K562 (cell line): ENCODE measurements at regions of chr17 and their contacts with region 1.

Region 1: DNA sequence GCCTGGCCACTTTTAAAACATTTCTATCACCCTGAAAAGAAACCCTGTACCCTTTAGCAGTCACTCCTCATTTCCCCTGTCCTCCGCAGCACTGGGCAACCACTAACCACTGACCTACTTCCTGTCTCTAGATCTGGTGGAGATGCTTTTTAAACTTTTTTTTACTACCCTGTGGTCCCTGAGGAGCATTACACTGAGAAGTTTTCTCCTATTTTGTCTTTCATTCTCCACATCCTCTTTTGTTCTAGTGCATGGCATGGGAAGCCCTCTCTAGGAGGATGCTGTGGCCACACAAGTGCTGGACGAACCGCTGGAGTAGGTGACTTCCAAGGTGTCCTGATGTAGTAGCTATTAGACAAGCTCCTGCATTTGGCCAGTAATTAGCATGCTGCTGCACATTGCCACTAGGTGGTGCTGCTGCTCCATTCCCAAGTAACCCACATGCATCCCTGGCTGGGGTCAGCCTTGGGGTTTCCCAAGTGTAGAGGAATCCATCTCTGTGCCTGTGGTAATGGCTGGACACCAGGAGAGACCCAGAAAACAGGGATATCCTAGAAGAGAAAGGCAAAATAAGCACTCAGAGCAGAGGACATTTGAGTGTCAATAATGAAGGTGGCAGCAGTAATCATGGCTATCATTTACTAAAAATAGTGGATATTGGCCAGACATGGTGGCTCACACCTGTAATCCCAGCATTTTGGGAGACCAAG is 143.8 kb upstream of the CRHR1 start:
- DNase-seq: peak; percentile 69 to 83 (median 80)
- ATAC-seq: peak; percentile 96
- H3K4me3 ChIP-seq: no peak overlapping the region
- H3K27ac ChIP-seq: no peak overlapping the region
- H3K4me1 ChIP-seq: no peaks in the 10 kb centered on the region
- H3K27me3 ChIP-seq: peaks cover 8 to 14% of the 10 kb centered on the region in 2 experiments; a peak in 4 of 5 replicates
- CTCF ChIP-seq: peak; percentile 94 to 96 (median 96)
- EP300 ChIP-seq: no peak
- POLR2A ChIP-seq: no peak
- RAD21 ChIP-seq: peak; percentile 85 to 92

Region 2: GRCh38 chr17:45428050-45428617 is 212.2 kb before region 1 on chr17:
- CTCF ChIA-PET with region 1: no interaction called
- POLR2A ChIA-PET with region 1: no interaction called
- in situ Hi-C with region 1: loop called (anchors 10 kb)
- intact Hi-C with region 1: no loop called
- DNase-seq: peak; percentile 68 to 80 (median 80)
- ATAC-seq: peak; percentile 72
- H3K4me3 ChIP-seq: no peak overlapping the region
- H3K27ac ChIP-seq: no peak overlapping the region
- H3K4me1 ChIP-seq: peaks cover 8 to 54% of the 10 kb centered on the region in 2 experiments
- H3K27me3 ChIP-seq: no peaks in the 10 kb centered on the region
- CTCF ChIP-seq: peak; percentile 82 to 95 (median 89)
- EP300 ChIP-seq: no peak
- POLR2A ChIP-seq: no peak
- RAD21 ChIP-seq: peak; percentile 64 to 86

Region 3: DNA sequence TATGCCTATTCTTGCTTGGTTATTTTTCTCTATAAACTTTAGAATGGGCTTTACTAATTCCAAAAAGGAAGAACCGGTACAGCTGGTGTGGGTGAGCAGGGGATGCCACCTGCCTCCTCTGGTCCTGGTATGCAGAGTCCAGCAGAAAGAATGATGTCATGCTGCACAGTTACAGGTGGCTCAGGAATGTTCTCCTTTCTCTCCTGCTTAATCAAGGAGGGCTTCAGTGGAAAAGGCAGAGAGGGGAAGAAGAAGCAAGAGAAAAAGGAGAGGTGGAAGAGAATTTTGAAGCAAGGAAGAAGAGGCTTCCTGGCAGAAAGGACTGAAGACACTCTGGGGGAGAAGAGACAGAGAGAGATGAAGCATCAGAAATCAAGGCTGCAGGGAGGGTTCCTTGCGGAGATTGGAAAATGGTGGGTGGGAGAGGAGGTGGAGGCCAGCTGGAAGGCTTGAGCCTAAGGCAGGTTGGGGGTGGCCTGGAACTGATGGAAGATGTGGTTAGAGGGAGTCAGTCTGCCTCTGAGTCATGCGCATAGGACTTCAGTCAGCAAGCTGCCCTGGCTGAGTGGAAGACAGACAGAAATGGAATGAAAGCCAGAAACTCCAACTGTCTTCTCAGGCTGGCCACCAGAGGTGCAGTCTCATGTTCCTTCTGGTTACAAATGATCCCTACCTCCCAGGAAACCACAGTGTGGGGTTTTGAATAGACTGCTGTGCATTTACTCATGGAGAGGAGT is 79.2 kb after region 1 on chr17:
- CTCF ChIA-PET with region 1: no interaction called
- POLR2A ChIA-PET with region 1: no interaction called
- in situ Hi-C with region 1: no loop called
- intact Hi-C with region 1: loop called (anchors 10 kb)
- DNase-seq: peak; percentile 24 to 39 (median 28)
- ATAC-seq: peak; percentile 85
- H3K4me3 ChIP-seq: no peak overlapping the region
- H3K27ac ChIP-seq: no peak overlapping the region
- H3K4me1 ChIP-seq: no peaks in the 10 kb centered on the region
- H3K27me3 ChIP-seq: peaks cover 16 to 57% of the 10 kb centered on the region in 2 experiments; a peak in 3 of 5 replicates
- CTCF ChIP-seq: peak; percentile 52 to 58 (median 55)
- EP300 ChIP-seq: no peak
- POLR2A ChIP-seq: no peak
- RAD21 ChIP-seq: no peak

Region 4: DNA sequence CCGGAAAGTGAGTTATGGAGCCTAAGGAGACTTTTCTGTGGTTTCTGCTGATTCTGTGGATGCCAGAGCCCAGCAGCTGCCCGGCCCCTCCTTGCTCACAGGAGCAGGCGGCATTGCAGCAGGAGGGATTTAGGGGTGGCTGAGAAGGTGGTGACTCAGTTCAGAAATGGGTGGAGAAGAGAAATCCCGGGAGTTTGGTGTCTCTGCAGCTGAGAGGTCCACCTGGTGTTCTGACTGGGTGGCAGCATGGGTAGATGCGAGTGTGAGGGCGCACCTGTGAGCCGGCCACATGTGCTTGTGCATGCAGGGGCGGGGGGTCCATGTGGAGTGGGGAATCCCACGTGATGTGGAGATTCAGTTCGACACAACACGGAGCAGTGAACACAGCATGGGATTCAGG is 188.3 kb after region 1 on chr17:
- CTCF ChIA-PET with region 1: interaction called, 25 read pairs
- POLR2A ChIA-PET with region 1: interaction called, 5 read pairs
- in situ Hi-C with region 1: loop called (anchors 5 kb)
- intact Hi-C with region 1: loop called (anchors 1 kb)
- DNase-seq: no peak
- ATAC-seq: no peak
- H3K4me3 ChIP-seq: no peak overlapping the region
- H3K27ac ChIP-seq: no peak overlapping the region
- H3K4me1 ChIP-seq: peaks cover 0 to 4% of the 10 kb centered on the region in 2 experiments; a peak in 2 of 5 replicates
- H3K27me3 ChIP-seq: peaks cover 13 to 75% of the 10 kb centered on the region in 2 experiments; a peak in 4 of 5 replicates
- CTCF ChIP-seq: 0 out of 6 replicates have a peak, but pooled peaks of 1 of the 3 experiments have one; percentile 1
- EP300 ChIP-seq: no peak
- POLR2A ChIP-seq: no peak
- RAD21 ChIP-seq: no peak

Region 5: DNA sequence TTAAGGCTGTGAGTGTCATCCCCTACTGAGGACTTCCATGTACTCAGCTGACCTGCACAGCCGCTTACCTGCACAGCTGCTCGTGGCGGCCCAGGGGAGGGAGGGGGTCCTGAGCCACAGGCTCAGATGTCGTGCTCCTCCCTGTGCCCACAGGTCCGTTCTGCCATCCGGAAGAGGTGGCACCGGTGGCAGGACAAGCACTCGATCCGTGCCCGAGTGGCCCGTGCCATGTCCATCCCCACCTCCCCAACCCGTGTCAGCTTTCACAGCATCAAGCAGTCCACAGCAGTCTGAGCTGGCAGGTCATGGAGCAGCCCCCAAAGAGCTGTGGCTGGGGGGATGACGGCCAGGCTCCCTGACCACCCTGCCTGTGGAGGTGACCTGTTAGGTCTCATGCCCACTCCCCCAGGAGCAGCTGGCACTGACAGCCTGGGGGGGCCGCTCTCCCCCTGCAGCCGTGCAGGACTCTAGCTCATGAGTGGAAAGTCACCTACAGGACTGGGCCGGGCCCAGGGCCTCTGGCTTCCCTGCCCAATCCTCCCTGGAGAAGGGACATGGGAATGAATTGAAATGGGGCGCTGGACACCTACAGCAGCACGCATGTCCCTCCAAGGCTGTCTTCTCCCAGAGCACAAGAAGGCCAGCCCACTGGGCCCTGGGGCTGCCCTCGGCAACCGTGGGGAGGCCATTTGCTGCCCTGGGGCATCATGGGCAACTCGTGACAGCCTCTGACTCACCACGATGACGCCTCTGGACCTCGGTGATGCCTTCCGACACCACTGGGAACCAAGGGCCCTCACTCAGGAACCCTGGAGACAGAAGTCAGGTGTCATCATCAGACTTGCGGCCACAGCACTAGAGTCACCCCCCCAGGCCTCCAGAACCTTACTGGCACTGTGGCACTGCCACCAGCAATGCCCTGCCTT is 194.4 kb after region 1 on chr17:
- CTCF ChIA-PET with region 1: interaction called, 25 read pairs
- POLR2A ChIA-PET with region 1: no interaction called
- in situ Hi-C with region 1: loop called (anchors 5 kb)
- intact Hi-C with region 1: loop called (anchors 1 kb)
- DNase-seq: no peak
- ATAC-seq: no peak
- H3K4me3 ChIP-seq: no peak overlapping the region
- H3K27ac ChIP-seq: no peak overlapping the region
- H3K4me1 ChIP-seq: peaks cover 0 to 4% of the 10 kb centered on the region in 2 experiments; a peak in 2 of 5 replicates
- H3K27me3 ChIP-seq: peaks cover 4 to 67% of the 10 kb centered on the region in 2 experiments; a peak in 3 of 5 replicates
- CTCF ChIP-seq: no peak
- EP300 ChIP-seq: no peak
- POLR2A ChIP-seq: no peak
- RAD21 ChIP-seq: no peak

Region 6: GRCh38 chr17:45852535-45853297 is 212.4 kb after region 1 on chr17:
- CTCF ChIA-PET with region 1: interaction called, 4 read pairs
- POLR2A ChIA-PET with region 1: no interaction called
- in situ Hi-C with region 1: no loop called
- intact Hi-C with region 1: loop called (anchors 1 kb)
- DNase-seq: peak; percentile 66 to 81 (median 70)
- ATAC-seq: peak; percentile 76
- H3K4me3 ChIP-seq: no peak overlapping the region
- H3K27ac ChIP-seq: no peak overlapping the region
- H3K4me1 ChIP-seq: peaks cover 0 to 9% of the 10 kb centered on the region in 2 experiments; a peak in 2 of 5 replicates
- H3K27me3 ChIP-seq: peaks cover 0 to 30% of the 10 kb centered on the region in 2 experiments; a peak in 2 of 5 replicates
- CTCF ChIP-seq: peak; percentile 88 to 96 (median 90)
- EP300 ChIP-seq: no peak
- POLR2A ChIP-seq: no peak
- RAD21 ChIP-seq: peak; percentile 72 to 81